CD4-positive, alpha-beta memory T cell (primary cell): ENCODE measurements at regions of chr10 and their contacts with region 1.

Region 1: DNA sequence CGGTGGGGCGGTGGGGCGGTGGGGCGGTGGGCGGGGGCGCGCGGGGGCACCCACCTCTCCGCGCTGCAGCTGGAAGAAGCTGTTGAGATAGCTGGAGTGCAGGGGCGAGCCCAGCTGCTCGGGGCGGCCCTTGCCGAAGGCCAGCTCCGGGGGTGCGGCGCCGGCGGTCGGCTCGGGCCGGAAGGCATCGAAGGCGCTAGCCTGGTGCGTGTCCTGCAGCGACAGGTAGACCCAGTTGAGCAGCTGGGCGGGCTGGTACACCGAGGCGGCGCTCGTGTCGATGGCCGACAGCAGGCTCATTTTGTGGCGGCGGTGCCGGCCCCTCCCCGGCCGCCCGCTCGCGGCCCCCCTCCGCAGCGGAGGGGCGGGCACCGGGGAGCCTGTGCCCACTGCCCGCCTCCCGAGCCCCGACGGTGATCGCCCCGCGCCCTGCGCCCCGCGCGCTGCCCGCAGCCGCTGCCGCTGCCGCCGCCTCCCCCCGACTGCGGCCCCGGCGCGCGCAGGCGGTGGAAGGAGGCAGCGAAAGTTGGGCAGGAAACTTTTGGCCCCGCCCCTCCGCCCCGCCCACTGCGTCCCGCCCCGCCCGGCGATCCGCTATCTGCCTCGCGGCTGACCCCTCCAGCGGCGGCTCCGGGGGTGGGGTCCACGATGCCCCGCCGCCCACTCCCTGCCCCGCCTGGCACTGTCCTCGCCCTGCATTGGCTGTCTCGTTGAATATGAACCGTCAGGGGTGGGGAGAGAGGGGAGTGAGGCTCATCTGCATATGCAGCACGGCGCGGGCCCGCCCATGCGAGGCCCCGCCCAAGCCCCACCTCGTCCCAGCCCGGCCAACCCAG is at the start of gene ZCCHC24:
- DNase-seq: peak; percentile 95 to 97 (median 97)
- H3K4me3 ChIP-seq: peak within 1 kb of the TSS; percentile 63 to 64
- H3K4me3 Mint-ChIP-seq: peak within 1 kb of the TSS; percentile 87 to 98 (median 90)
- H3K27ac ChIP-seq: peak within 1 kb of the TSS; percentile 57
- H3K27ac Mint-ChIP-seq: peak within 1 kb of the TSS; percentile 85 to 98 (median 91)
- H3K4me1 ChIP-seq: peaks cover 21% of the 10 kb centered on the region
- H3K4me1 Mint-ChIP-seq: peaks cover 17 to 34% (median 23%) of the 10 kb centered on the region in 4 donors
- H3K27me3 ChIP-seq: no peaks in the 10 kb centered on the region
- H3K27me3 Mint-ChIP-seq: no peaks in the 10 kb centered on the region
- total RNA-seq, gene ZCCHC24: 1.7 to 1.9 TPM

Region 2: GRCh38 chr10:79242620-79243152 is 202.7 kb before region 1 on chr10:
- CTCF ChIA-PET with region 1: no interaction called
- POLR2A ChIA-PET with region 1: no interaction called
- intact Hi-C with region 1: loop called (anchors 10 kb)
- DNase-seq: peak; percentile 31 to 70 (median 39)
- H3K4me3 ChIP-seq: peak overlapping the region in 1 of 2 donors; percentile 52
- H3K4me3 Mint-ChIP-seq: peak overlapping the region in 7 of 8 donors; percentile 31 to 81 (median 58)
- H3K27ac ChIP-seq: no peak overlapping the region
- H3K27ac Mint-ChIP-seq: peak overlapping the region in 1 of 7 donors; percentile 78
- H3K4me1 ChIP-seq: peaks cover 49% of the 10 kb centered on the region
- H3K4me1 Mint-ChIP-seq: peaks cover 30 to 53% (median 44%) of the 10 kb centered on the region in 4 donors
- H3K27me3 ChIP-seq: no peaks in the 10 kb centered on the region
- H3K27me3 Mint-ChIP-seq: no peaks in the 10 kb centered on the region

Region 3: DNA sequence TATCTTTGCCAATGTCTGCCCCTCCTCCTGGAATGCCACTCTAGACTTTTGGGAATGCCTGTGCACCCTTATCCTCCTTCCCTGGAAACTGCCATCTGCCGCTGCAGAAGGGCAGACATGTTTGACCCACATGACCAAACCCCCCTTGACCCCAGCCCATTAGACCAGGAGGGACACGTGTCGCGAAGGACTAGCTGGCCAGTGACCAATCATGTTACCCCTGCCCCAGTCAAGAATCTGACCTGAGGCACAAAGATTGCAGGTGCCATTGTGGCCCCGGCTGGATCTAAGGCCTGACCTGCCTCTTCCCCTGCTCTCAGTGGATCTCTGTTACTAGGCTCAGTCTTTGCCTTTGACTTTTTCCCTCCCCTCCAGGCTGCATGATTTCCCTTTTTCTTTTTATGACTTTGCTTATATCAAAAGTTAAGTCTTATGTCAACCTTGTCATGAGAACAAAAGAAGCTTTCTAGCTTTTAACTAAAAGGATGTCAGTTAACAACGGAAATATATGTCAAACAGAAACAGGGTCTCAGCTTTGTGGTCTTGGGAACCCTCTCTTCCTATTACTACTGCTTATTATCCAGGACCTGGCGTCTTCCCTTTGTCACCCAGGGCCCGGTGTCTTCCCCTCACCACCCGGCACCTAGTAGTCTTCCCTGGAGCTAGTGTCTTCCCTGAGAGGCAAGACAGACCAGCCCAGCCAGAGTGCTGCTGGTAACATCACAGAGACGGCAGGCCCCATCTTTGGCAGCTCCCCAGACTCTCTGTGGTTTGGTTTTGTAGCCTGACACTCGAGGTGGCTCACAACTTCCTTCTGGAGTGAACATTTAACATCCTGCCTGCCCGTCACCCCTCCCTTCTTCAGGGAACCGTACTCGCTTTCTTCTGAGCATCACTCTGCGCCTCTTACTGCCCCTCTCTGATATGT is 122.5 kb before region 1 on chr10:
- CTCF ChIA-PET with region 1: interaction called, 4 read pairs
- POLR2A ChIA-PET with region 1: interaction called, 6 read pairs
- intact Hi-C with region 1: loop called (anchors 5 kb)
- DNase-seq: peak; percentile 85 to 94 (median 88)
- H3K4me3 ChIP-seq: peak overlapping the region; percentile 8 to 41
- H3K4me3 Mint-ChIP-seq: peak overlapping the region; percentile 41 to 91 (median 85)
- H3K27ac ChIP-seq: peak overlapping the region; percentile 37
- H3K27ac Mint-ChIP-seq: peak overlapping the region; percentile 92 to 98 (median 96)
- H3K4me1 ChIP-seq: peaks cover 88% of the 10 kb centered on the region
- H3K4me1 Mint-ChIP-seq: peaks cover 58 to 68% (median 65%) of the 10 kb centered on the region in 4 donors
- H3K27me3 ChIP-seq: no peaks in the 10 kb centered on the region
- H3K27me3 Mint-ChIP-seq: no peaks in the 10 kb centered on the region

Region 4: GRCh38 chr10:79463578-79464496 is 18.5 kb after region 1 on chr10:
- CTCF ChIA-PET with region 1: interaction called, 8 read pairs
- POLR2A ChIA-PET with region 1: no interaction called
- intact Hi-C with region 1: loop called (anchors 1 kb)
- DNase-seq: no peak
- H3K4me3 ChIP-seq: no peak overlapping the region
- H3K4me3 Mint-ChIP-seq: no peak overlapping the region
- H3K27ac ChIP-seq: no peak overlapping the region
- H3K27ac Mint-ChIP-seq: no peak overlapping the region
- H3K4me1 ChIP-seq: no peaks in the 10 kb centered on the region
- H3K4me1 Mint-ChIP-seq: peaks cover 0 to 1% (median 0%) of the 10 kb centered on the region in 4 donors
- H3K27me3 ChIP-seq: no peaks in the 10 kb centered on the region
- H3K27me3 Mint-ChIP-seq: peaks cover 0 to 3% of the 10 kb centered on the region in 2 donors

Region 5: DNA sequence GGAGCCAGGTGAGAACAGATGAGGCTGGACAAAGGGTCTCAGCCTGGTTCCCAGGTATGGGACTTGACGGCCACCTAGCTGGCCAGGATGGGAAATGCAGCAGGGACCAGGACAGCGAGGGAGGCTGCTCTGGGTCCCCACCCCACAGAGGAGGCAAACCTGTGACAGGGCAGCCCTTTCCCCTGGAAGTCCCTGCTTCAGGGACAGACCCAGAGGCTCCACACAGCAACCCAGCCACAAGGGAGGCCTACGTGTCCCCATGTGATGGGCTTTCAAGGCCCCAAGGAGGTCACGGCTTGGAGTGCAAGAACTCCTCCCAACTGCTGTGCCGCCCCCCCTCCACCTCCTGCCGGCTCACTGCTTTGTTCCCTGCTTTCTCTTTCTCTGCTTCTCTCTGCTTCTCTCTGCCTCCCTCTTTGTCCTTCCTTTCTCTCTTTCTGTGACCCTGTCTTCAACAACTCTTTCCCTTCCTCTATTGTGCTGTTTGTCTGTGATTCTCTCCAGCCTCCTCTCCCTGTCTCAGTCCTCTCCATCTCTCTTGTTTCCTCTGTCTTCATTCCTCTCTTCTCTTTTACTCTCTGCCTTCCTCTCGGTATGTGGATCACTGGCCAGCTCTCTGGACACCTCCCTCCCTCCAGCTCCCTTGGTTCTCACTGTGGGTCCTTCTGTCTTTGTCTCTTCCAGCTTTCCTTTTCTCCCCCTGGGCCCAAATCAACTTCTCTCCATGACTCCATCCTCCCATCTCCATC is 57.4 kb after region 1 on chr10:
- CTCF ChIA-PET with region 1: no interaction called
- POLR2A ChIA-PET with region 1: no interaction called
- intact Hi-C with region 1: no loop called
- DNase-seq: no peak
- H3K4me3 ChIP-seq: no peak overlapping the region
- H3K4me3 Mint-ChIP-seq: no peak overlapping the region
- H3K27ac ChIP-seq: no peak overlapping the region
- H3K27ac Mint-ChIP-seq: no peak overlapping the region
- H3K4me1 ChIP-seq: no peaks in the 10 kb centered on the region
- H3K4me1 Mint-ChIP-seq: peaks cover 0 to 2% (median under 1%) of the 10 kb centered on the region in 4 donors
- H3K27me3 ChIP-seq: no peaks in the 10 kb centered on the region
- H3K27me3 Mint-ChIP-seq: peaks cover 21 to 22% of the 10 kb centered on the region in 2 donors